CD8-positive, alpha-beta memory T cell (primary cell): ENCODE measurements at regions of chr11 and their contacts with region 1.

Region 1: GRCh38 chr11:64778508-64779346 is at the start of gene SF1:
- DNase-seq: peak; percentile 98 to 100 (median 100)
- H3K4me3 ChIP-seq: peak within 1 kb of the TSS; percentile 99
- H3K4me3 Mint-ChIP-seq: peak within 1 kb of the TSS; percentile 90 to 96 (median 95)
- H3K27ac ChIP-seq: peak within 1 kb of the TSS; percentile 98
- H3K27ac Mint-ChIP-seq: peak within 1 kb of the TSS; percentile 97 to 100 (median 99)
- H3K4me1 ChIP-seq: peaks cover 52% of the 10 kb centered on the region
- H3K4me1 Mint-ChIP-seq: peaks cover 58 to 64% (median 63%) of the 10 kb centered on the region in 3 donors
- H3K27me3 ChIP-seq: no peaks in the 10 kb centered on the region
- H3K27me3 Mint-ChIP-seq: peaks cover 0 to 7% of the 10 kb centered on the region in 2 donors
- total RNA-seq, gene SF1: 403 to 423 TPM

Region 2: DNA sequence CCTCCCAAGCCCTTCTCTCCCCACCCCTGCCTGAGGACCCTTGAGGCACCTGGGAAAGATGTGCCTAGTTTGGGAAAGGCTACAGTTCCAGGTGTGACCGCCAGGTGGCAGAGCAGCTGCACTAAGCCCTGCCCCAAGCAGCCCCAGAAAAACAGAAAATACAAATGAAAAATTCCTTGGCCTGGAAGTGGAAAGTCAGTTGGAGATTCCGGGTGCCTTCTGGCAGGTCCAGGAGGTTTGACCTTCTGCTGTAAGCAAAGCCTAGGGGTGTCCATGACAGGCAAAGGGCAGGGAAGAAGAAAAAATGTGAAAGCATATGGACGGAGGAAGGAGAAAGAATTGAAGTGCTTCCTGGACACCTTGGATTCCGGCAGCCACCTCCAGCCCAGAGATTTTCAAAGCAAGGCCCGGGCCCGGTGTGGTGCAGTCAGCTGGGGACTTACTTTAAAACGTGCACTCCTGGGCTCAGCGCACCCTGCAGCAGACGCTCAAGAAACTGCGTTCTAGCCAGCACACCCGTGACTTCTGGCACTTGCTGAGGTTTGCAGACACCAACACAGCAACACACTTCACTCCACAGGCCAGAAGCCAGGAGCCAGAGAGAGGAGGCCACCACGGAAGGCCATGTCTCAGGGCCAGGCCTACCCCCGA is 225.1 kb before region 1 on chr11:
- CTCF ChIA-PET with region 1: no interaction called
- POLR2A ChIA-PET with region 1: no interaction called
- DNase-seq: peak; percentile 21 to 61 (median 33)
- H3K4me3 ChIP-seq: no peak overlapping the region
- H3K4me3 Mint-ChIP-seq: no peak overlapping the region
- H3K27ac ChIP-seq: no peak overlapping the region
- H3K27ac Mint-ChIP-seq: no peak overlapping the region
- H3K4me1 ChIP-seq: no peaks in the 10 kb centered on the region
- H3K4me1 Mint-ChIP-seq: no peaks in the 10 kb centered on the region
- H3K27me3 ChIP-seq: no peaks in the 10 kb centered on the region
- H3K27me3 Mint-ChIP-seq: peaks cover 11 to 12% of the 10 kb centered on the region in 2 donors

Region 3: GRCh38 chr11:64629796-64630562 is 148.7 kb before region 1 on chr11:
- CTCF ChIA-PET with region 1: no interaction called
- POLR2A ChIA-PET with region 1: no interaction called
- DNase-seq: no peak
- H3K4me3 ChIP-seq: no peak overlapping the region
- H3K4me3 Mint-ChIP-seq: no peak overlapping the region
- H3K27ac ChIP-seq: no peak overlapping the region
- H3K27ac Mint-ChIP-seq: peak overlapping the region in 1 of 8 donors; percentile 26
- H3K4me1 ChIP-seq: peaks cover 8% of the 10 kb centered on the region
- H3K4me1 Mint-ChIP-seq: peaks cover 12 to 17% (median 15%) of the 10 kb centered on the region in 3 donors
- H3K27me3 ChIP-seq: no peaks in the 10 kb centered on the region
- H3K27me3 Mint-ChIP-seq: peaks cover 5 to 26% of the 10 kb centered on the region in 2 donors

Region 4: GRCh38 chr11:64688534-64688982 is 90.2 kb before region 1 on chr11:
- CTCF ChIA-PET with region 1: interaction called, 10 read pairs
- POLR2A ChIA-PET with region 1: no interaction called
- DNase-seq: peak; percentile 83 to 92 (median 87)
- H3K4me3 ChIP-seq: peak overlapping the region; percentile 39
- H3K4me3 Mint-ChIP-seq: peak overlapping the region in 6 of 7 donors; percentile 55 to 82 (median 66)
- H3K27ac ChIP-seq: no peak overlapping the region
- H3K27ac Mint-ChIP-seq: peak overlapping the region in 6 of 8 donors; percentile 1 to 81 (median 27)
- H3K4me1 ChIP-seq: peaks cover 9% of the 10 kb centered on the region
- H3K4me1 Mint-ChIP-seq: peaks cover 9 to 27% (median 24%) of the 10 kb centered on the region in 3 donors
- H3K27me3 ChIP-seq: peaks cover 17% of the 10 kb centered on the region
- H3K27me3 Mint-ChIP-seq: peaks cover 23 to 29% of the 10 kb centered on the region in 2 donors

Region 5: GRCh38 chr11:64759561-64760349 is 19.0 kb before region 1 on chr11 and contains the start of gene PYGM:
- CTCF ChIA-PET with region 1: interaction called, 441 read pairs
- POLR2A ChIA-PET with region 1: interaction called, 45 read pairs
- DNase-seq: peak in 1 of 5 donors; percentile 40
- H3K4me3 ChIP-seq: peak within 1 kb of the TSS; percentile 42
- H3K4me3 Mint-ChIP-seq: peak within 1 kb of the TSS in 6 of 7 donors; percentile 7 to 79 (median 50)
- H3K27ac ChIP-seq: peak within 1 kb of the TSS; percentile 12
- H3K27ac Mint-ChIP-seq: peak within 1 kb of the TSS; percentile 63 to 97 (median 84)
- H3K4me1 ChIP-seq: peaks cover 58% of the 10 kb centered on the region
- H3K4me1 Mint-ChIP-seq: peaks cover 53 to 64% (median 56%) of the 10 kb centered on the region in 3 donors
- H3K27me3 ChIP-seq: no peaks in the 10 kb centered on the region
- H3K27me3 Mint-ChIP-seq: peaks cover 0 to 3% of the 10 kb centered on the region in 2 donors
- total RNA-seq, gene PYGM: 2.2 TPM

Region 6: DNA sequence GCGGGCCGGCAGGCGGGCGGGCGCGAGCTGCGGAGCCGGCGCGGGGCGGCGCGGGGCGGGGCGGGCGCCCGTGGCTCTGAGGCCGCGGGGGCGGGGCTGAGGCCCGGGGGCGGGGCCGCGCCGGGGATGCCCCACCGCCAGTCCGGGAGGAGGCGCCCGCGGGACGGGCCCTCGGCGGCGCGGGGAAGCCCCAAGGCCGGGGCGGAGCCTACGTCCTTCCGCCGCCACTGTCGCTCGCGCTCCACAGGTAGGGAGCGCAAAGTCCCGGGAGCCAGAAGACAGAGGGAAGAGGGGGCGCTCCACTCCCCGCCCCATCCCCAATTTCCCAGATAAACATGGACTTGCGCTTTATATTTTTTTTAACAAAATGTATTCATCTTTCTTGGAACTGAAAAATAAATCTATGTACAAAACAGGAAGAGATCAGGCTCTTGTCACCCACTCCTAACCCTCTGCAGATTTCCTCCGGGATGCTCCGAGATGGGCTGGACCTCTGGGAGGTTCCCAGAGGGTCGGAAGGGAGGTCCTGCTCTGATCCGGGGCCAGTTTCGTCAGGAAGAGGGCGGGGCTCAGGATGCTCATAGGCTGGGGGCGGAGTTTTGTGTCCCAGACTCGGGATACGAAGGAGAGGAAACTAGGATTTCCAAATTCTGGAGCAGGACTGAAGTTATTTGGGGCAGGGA is 24.6 kb after region 1 on chr11 and contains the start of gene MAP4K2:
- CTCF ChIA-PET with region 1: interaction called, 4 read pairs
- POLR2A ChIA-PET with region 1: interaction called, 46 read pairs
- DNase-seq: peak; percentile 87 to 90 (median 88)
- H3K4me3 ChIP-seq: peak within 1 kb of the TSS; percentile 83
- H3K4me3 Mint-ChIP-seq: peak within 1 kb of the TSS; percentile 83 to 95 (median 88)
- H3K27ac ChIP-seq: peak within 1 kb of the TSS; percentile 78
- H3K27ac Mint-ChIP-seq: peak within 1 kb of the TSS; percentile 80 to 98 (median 96)
- H3K4me1 ChIP-seq: peaks cover 28% of the 10 kb centered on the region
- H3K4me1 Mint-ChIP-seq: peaks cover 23 to 45% (median 23%) of the 10 kb centered on the region in 3 donors
- H3K27me3 ChIP-seq: no peaks in the 10 kb centered on the region
- H3K27me3 Mint-ChIP-seq: peaks cover 0 to 4% of the 10 kb centered on the region in 2 donors
- total RNA-seq, gene MAP4K2: 54.8 to 55.3 TPM

Region 7: DNA sequence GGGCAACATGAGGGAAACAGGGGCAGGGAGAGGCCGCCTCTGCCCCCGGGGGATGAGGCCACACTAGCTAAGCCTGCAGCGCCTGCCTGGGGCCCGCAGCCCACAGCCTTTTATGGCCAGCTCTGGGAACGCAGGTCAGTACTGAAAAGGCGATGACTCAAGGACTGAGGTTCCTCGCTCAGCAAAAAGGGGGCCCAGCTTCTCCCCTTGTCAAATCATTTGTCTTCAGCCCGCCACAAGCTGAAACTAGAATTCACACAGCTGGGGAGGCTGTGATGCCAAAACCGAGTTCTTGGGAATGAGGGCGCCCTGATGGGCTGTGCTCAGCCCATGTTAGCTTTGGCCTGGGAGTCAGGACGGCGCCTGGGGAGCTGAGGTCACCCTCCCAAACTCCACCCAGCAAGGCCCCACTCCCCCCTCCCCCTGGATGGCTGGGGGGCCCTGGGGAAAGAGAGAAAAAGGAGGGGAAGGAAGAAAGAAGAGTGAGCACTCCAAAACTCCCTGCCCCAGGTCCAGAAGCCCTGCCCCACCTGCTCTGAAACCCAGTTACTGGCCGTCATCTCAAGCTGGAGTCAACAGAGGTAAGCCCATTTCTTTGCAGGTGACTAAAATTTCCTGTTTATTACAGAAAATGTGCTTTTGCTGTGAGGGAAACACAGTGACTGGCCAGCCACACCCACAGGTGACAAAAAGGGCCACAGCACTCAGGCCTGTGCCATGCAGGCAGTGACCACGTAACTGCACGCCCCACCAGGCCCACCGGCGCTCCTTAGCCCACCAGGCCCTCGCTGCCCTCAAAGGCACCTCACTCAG is 86.0 kb after region 1 on chr11:
- CTCF ChIA-PET with region 1: interaction called, 3 read pairs
- POLR2A ChIA-PET with region 1: interaction called, 13 read pairs
- DNase-seq: no peak
- H3K4me3 ChIP-seq: peak overlapping the region; percentile 66
- H3K4me3 Mint-ChIP-seq: peak overlapping the region; percentile 76 to 91 (median 78)
- H3K27ac ChIP-seq: peak overlapping the region; percentile 75
- H3K27ac Mint-ChIP-seq: peak overlapping the region; percentile 80 to 99 (median 96)
- H3K4me1 ChIP-seq: peaks cover 100% of the 10 kb centered on the region
- H3K4me1 Mint-ChIP-seq: peaks cover 84 to 95% (median 91%) of the 10 kb centered on the region in 3 donors
- H3K27me3 ChIP-seq: no peaks in the 10 kb centered on the region
- H3K27me3 Mint-ChIP-seq: peaks cover 0 to 1% of the 10 kb centered on the region in 2 donors

Region 8: GRCh38 chr11:64971421-64972233 is 192.9 kb after region 1 on chr11 and contains the start of gene MAJIN:
- CTCF ChIA-PET with region 1: no interaction called
- POLR2A ChIA-PET with region 1: no interaction called
- DNase-seq: peak; percentile 63 to 89 (median 82)
- H3K4me3 ChIP-seq: peak within 1 kb of the TSS; percentile 30
- H3K4me3 Mint-ChIP-seq: peak within 1 kb of the TSS; percentile 36 to 76 (median 69)
- H3K27ac ChIP-seq: no peak within 1 kb of the TSS
- H3K27ac Mint-ChIP-seq: peak within 1 kb of the TSS in 3 of 8 donors; percentile 50 to 66 (median 64)
- H3K4me1 ChIP-seq: peaks cover 5% of the 10 kb centered on the region
- H3K4me1 Mint-ChIP-seq: peaks cover 3 to 14% (median 9%) of the 10 kb centered on the region in 3 donors
- H3K27me3 ChIP-seq: no peaks in the 10 kb centered on the region
- H3K27me3 Mint-ChIP-seq: peaks cover 5 to 7% of the 10 kb centered on the region in 2 donors
- total RNA-seq, gene MAJIN: not detected

Region 9: DNA sequence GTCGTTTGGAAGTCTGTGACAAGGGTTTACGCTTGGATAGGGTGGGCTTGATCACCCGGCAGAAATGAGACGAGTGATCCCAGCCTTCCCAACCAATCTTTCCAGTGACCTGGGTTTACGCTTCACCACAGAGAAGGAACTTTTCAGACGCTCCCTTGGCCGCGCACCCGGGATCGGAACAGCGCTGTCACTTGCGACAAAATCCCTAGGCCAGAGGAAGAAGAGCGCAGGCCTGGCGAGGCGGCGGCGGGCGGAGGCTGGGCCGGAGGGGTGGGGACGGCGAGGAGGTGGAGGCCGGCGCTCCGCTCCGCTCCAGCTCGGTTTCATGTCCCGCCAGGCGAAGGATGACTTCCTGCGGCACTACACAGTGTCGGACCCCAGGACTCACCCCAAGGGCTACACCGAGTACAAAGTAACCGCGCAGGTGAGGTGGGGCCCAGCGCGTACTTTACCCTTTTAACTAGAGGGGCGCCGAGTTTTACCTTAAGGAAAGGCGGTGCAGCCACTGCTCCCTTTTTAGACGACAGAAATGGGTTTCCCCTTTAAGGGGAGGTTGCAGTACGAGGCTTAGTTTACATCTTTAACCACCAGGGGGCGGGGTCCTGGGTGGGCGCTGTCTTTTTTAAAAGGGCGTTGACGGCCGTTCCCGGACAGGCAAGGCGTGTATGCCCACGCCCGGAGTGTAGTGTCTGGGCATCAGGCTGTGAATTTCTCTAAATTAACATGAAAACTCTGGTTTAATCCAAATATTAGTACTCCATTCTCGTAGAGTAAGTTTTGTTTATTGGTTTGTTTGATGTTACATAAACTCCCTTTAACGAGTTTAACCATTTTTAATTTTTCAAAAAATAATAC is 248.7 kb after region 1 on chr11 and contains the start of gene SNX15:
- CTCF ChIA-PET with region 1: no interaction called
- POLR2A ChIA-PET with region 1: no interaction called
- DNase-seq: peak; percentile 83 to 94 (median 92)
- H3K4me3 ChIP-seq: peak within 1 kb of the TSS; percentile 51
- H3K4me3 Mint-ChIP-seq: peak within 1 kb of the TSS; percentile 53 to 92 (median 83)
- H3K27ac ChIP-seq: peak within 1 kb of the TSS; percentile 52
- H3K27ac Mint-ChIP-seq: peak within 1 kb of the TSS; percentile 81 to 96 (median 92)
- H3K4me1 ChIP-seq: peaks cover 17% of the 10 kb centered on the region
- H3K4me1 Mint-ChIP-seq: peaks cover 20 to 24% (median 21%) of the 10 kb centered on the region in 3 donors
- H3K27me3 ChIP-seq: no peaks in the 10 kb centered on the region
- H3K27me3 Mint-ChIP-seq: no peaks in the 10 kb centered on the region
- total RNA-seq, gene SNX15: 18.3 to 21.6 TPM